A673 (cell line): ENCODE measurements at regions of chr12 and their contacts with region 1.

Region 1: GRCh38 chr12:1939801-1940607 is 21.6 kb upstream of the CACNA2D4 start:
- DNase-seq: peak; percentile 85
- H3K4me3 ChIP-seq: no peak overlapping the region
- H3K27ac ChIP-seq: no peak overlapping the region
- H3K4me1 ChIP-seq: peaks cover 4% of the 10 kb centered on the region
- H3K27me3 ChIP-seq: no peaks in the 10 kb centered on the region
- CTCF ChIP-seq: peak; percentile 99

Region 2: DNA sequence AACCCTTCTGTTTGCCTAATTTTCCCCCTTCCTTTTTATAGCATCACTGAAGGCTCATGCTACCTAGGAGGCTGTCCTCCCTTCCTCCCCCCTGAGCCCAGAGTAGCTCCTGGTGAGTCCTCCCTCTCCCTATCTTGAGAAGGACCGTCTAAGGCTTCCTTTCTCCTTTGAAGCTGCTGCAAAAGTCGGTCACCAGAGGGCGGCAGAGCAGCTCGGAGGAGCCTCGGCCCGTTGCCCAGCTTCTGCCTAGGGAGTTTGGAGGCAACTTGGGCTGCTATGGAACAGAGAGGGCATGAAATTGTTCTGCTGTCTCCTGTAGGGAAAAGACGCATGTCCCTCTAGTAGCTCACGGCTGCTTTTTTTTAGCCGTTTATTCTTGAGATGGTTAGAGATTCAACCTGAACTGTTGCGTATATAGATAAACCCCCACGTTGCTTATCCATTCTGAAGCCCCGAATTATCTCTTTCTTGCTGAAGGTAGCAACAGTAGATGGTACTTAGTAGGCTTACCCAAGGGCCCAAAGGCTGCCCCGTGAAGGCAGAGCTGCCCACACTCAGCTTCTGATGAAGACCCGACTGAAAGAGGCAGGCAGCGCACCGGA is 305.3 kb before region 1 on chr12:
- CTCF ChIA-PET with region 1: interaction called, 19 read pairs
- POLR2A ChIA-PET with region 1: no interaction called
- intact Hi-C with region 1: loop called (anchors 5 kb)
- DNase-seq: peak; percentile 89
- H3K4me3 ChIP-seq: no peak overlapping the region
- H3K27ac ChIP-seq: no peak overlapping the region
- H3K4me1 ChIP-seq: peaks cover 6% of the 10 kb centered on the region
- H3K27me3 ChIP-seq: no peaks in the 10 kb centered on the region
- CTCF ChIP-seq: peak; percentile 97

Region 3: GRCh38 chr12:1655225-1655788 is 284.7 kb before region 1 on chr12:
- CTCF ChIA-PET with region 1: interaction called, 35 read pairs
- POLR2A ChIA-PET with region 1: no interaction called
- intact Hi-C with region 1: loop called (anchors 2 kb)
- DNase-seq: no peak
- H3K4me3 ChIP-seq: no peak overlapping the region
- H3K27ac ChIP-seq: no peak overlapping the region
- H3K4me1 ChIP-seq: no peaks in the 10 kb centered on the region
- H3K27me3 ChIP-seq: no peaks in the 10 kb centered on the region
- CTCF ChIP-seq: no peak